AG04450 (cell line): ENCODE measurements at regions of chr7 and their contacts with region 1.

Region 1: GRCh38 chr7:131109757-131110293 is 217.9 kb upstream of the MKLN1 start:
- DNase-seq: no peak
- H3K4me3 ChIP-seq: peak overlapping the region; percentile 72
- H3K27ac ChIP-seq: peak overlapping the region; percentile 94
- H3K27me3 ChIP-seq: no peaks in the 10 kb centered on the region
- CTCF ChIP-seq: no peak

Region 2: GRCh38 chr7:131071786-131072504 is 37.9 kb before region 1 on chr7:
- CTCF ChIA-PET with region 1: interaction called, 7 read pairs
- POLR2A ChIA-PET with region 1: interaction called, 12 read pairs
- DNase-seq: no peak
- H3K4me3 ChIP-seq: no peak overlapping the region
- H3K27ac ChIP-seq: no peak overlapping the region
- H3K27me3 ChIP-seq: no peaks in the 10 kb centered on the region
- CTCF ChIP-seq: peak; percentile 46

Region 3: GRCh38 chr7:131164025-131164899 is 54.4 kb after region 1 on chr7:
- CTCF ChIA-PET with region 1: no interaction called
- POLR2A ChIA-PET with region 1: interaction called, 10 read pairs
- DNase-seq: no peak
- H3K4me3 ChIP-seq: no peak overlapping the region
- H3K27ac ChIP-seq: no peak overlapping the region
- H3K27me3 ChIP-seq: no peaks in the 10 kb centered on the region
- CTCF ChIP-seq: no peak

Region 4: DNA sequence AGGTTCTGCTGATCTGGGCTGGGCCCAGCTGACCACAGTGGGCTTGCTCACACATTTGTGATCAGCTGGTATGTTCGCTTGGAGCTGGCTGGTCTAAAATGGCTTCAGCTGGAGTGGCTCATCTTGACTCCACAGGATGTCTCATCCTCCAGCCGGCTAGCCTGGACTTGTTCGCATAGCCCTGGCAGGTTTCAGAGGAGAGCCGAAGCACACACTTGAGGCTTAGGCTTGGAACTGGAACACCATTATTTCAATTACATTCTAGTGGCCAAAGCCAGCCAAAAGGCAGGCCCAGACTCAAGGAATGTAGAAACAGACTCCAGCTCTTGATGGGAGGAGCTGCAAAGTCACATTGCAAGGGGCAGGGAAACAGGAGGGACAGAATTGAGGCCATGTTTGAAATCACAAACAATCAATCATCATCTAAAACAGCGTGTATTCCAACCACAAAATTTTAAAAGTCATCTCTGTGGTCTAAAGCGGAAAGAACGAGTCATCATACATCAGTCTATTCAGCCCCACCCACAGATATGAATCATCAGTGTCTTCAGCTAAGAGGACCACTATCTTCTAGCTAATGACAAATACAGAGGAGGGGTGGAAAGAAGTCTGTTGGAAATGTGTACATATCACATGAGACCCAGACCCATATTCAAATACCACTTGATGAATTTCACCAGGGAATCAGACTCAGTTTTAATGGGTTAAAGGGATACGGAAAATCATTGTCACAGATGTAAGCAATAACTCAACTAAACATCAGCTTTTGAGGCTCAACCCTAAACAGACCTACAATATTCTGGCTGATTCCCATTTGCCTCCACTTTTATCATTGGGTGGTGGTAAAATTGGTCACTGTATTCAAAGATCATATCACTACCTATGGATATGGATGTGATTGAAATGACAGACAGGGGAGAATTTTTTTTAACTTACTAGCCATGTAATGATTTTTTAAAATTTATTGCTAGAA is 78.8 kb after region 1 on chr7:
- CTCF ChIA-PET with region 1: no interaction called
- POLR2A ChIA-PET with region 1: interaction called, 10 read pairs
- DNase-seq: peak; percentile 81
- H3K4me3 ChIP-seq: no peak overlapping the region
- H3K27ac ChIP-seq: peak overlapping the region; percentile 59
- H3K27me3 ChIP-seq: no peaks in the 10 kb centered on the region
- CTCF ChIP-seq: no peak

Region 5: DNA sequence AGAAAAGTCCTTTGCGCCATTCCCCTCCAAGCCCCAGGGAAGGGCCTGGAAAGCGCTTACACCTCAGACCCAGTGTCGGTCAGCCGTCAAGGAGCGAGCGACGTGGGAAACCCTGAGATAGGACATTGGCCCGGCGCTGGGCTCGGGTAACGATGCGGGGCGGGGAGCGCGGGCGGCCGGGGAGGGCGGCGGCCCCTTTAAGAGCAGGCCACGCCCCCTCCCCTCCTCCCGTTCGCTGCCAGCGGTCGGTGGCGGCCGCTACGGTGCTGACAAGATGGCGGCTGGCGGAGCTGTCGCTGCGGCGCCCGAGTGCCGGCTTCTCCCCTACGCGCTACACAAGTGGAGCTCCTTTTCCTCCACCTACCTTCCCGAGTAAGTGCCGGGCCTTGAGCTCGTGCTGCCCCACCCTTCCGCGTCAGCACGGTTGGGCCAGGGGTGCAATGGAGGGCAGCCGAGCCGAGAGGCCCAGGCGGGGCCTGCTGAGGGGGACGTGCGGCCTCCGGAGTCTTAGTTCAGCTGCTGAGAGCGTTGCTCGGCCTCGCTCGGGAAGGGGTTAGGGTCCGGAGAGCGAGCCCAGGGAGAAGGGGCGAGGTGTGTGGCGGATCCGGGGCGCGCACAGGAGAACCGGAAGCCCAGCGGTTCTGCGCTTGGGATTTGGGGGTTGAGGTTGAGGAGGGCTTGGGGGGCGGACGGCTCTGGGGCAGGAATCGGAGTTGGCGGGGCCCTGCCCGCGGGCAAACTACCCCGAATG is 218.0 kb after region 1 on chr7 and contains the start of gene MKLN1:
- CTCF ChIA-PET with region 1: no interaction called
- POLR2A ChIA-PET with region 1: interaction called, 13 read pairs
- DNase-seq: peak; percentile 50
- H3K4me3 ChIP-seq: peak within 1 kb of the TSS; percentile 86
- H3K27ac ChIP-seq: peak within 1 kb of the TSS; percentile 92
- H3K27me3 ChIP-seq: no peaks in the 10 kb centered on the region
- CTCF ChIP-seq: no peak
- polyA plus RNA-seq, gene MKLN1: 53.1 and 56.8 TPM in 2 replicates